SK-N-SH (cell line): ENCODE measurements at regions of chr14 and their contacts with region 1.

Region 1: GRCh38 chr14:62126879-62127478 is 364.8 kb downstream of the SNAPC1 start:
- DNase-seq: peak; percentile 28
- H3K4me3 ChIP-seq: no peak overlapping the region; a peak in 1 of 4 replicates
- H3K27ac ChIP-seq: no peak overlapping the region
- H3K4me1 ChIP-seq: no peaks in the 10 kb centered on the region
- H3K27me3 ChIP-seq: no peaks in the 10 kb centered on the region; the same call in 1 of the 2 replicates
- CTCF ChIP-seq: peak; percentile 85
- EP300 ChIP-seq: no peak
- RAD21 ChIP-seq: peak; percentile 90

Region 2: GRCh38 chr14:61296719-61297502 is 830.1 kb before region 1 on chr14:
- CTCF ChIA-PET with region 1: interaction called, 10 read pairs
- POLR2A ChIA-PET with region 1: no interaction called
- DNase-seq: peak; percentile 34
- H3K4me3 ChIP-seq: peak overlapping the region in 1 of 2 experiments; percentile 14; a peak in 1 of 4 replicates
- H3K27ac ChIP-seq: no peak overlapping the region
- H3K4me1 ChIP-seq: no peaks in the 10 kb centered on the region
- H3K27me3 ChIP-seq: no peaks in the 10 kb centered on the region
- CTCF ChIP-seq: peak; percentile 86
- EP300 ChIP-seq: no peak
- RAD21 ChIP-seq: peak; percentile 76

Region 3: DNA sequence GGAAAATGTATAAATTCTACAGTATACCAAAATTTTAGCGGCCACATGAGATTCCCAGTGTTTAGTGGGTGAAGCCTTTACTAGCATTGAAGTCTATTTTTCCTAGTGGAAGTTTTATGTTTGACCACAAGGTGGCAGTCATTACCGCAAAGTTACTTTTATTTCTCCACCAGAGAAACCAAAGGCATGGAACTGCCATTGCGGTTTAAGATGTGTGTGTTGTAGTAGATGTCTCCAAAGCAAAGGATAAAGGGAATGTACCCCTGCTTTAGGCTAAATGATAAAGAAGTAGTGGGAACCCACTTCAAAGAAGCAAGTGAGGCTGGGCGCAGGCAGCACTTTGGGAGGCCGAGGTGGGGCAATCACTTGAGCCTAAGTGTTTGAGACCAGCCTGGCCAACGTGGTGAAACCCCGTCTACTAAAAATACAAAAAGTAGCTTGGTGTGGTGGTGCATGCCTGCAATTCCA is 665.1 kb before region 1 on chr14:
- CTCF ChIA-PET with region 1: interaction called, 14 read pairs
- POLR2A ChIA-PET with region 1: no interaction called
- DNase-seq: peak; percentile 44
- H3K4me3 ChIP-seq: no peak overlapping the region; a peak in 1 of 4 replicates
- H3K27ac ChIP-seq: peak overlapping the region; percentile 51 to 97; a peak in 3 of 4 replicates
- H3K4me1 ChIP-seq: peaks cover 9 to 27% of the 10 kb centered on the region in 2 experiments
- H3K27me3 ChIP-seq: no peaks in the 10 kb centered on the region
- CTCF ChIP-seq: peak; percentile 78
- EP300 ChIP-seq: no peak
- RAD21 ChIP-seq: peak; percentile 97

Region 4: GRCh38 chr14:61894452-61895077 is 232.4 kb before region 1 on chr14:
- CTCF ChIA-PET with region 1: interaction called, 71 read pairs
- POLR2A ChIA-PET with region 1: no interaction called
- DNase-seq: peak; percentile 67
- H3K4me3 ChIP-seq: peak overlapping the region in 1 of 2 experiments; percentile 31; a peak in 1 of 4 replicates
- H3K27ac ChIP-seq: no peak overlapping the region
- H3K4me1 ChIP-seq: no peaks in the 10 kb centered on the region
- H3K27me3 ChIP-seq: peaks cover 12% of the 10 kb centered on the region; the same call in 1 of the 2 replicates
- CTCF ChIP-seq: peak; percentile 74
- EP300 ChIP-seq: no peak
- RAD21 ChIP-seq: peak; percentile 85

Region 5: GRCh38 chr14:61927520-61927919 is 199.5 kb before region 1 on chr14:
- CTCF ChIA-PET with region 1: interaction called, 11 read pairs
- POLR2A ChIA-PET with region 1: no interaction called
- DNase-seq: no peak
- H3K4me3 ChIP-seq: no peak overlapping the region
- H3K27ac ChIP-seq: peak overlapping the region in 1 of 2 experiments; percentile 34; a peak in 1 of 4 replicates
- H3K4me1 ChIP-seq: peaks cover 0 to 11% of the 10 kb centered on the region in 2 experiments; a peak in 2 of 4 replicates
- H3K27me3 ChIP-seq: no peaks in the 10 kb centered on the region
- CTCF ChIP-seq: no peak
- EP300 ChIP-seq: no peak
- RAD21 ChIP-seq: no peak

Region 6: DNA sequence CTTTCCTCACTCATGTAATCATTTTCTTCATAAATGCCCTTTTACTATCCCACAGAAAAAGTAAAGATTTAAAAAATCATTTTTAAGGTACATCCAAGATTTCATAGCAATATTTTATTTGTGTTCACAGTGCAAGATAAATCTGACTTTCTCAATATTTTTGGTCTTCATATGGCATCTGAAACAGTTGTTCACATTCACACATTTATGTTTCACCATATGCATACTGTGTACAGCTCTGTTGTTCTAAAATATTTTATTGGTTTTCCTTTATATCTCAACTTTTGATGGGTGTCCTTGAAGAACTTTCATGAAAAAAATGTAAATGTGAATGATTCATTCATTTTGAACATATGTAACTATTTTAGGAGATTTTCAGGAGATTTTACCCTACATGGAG is 16.0 kb before region 1 on chr14:
- CTCF ChIA-PET with region 1: interaction called, 59 read pairs
- POLR2A ChIA-PET with region 1: no interaction called
- DNase-seq: no peak
- H3K4me3 ChIP-seq: no peak overlapping the region
- H3K27ac ChIP-seq: no peak overlapping the region
- H3K4me1 ChIP-seq: no peaks in the 10 kb centered on the region
- H3K27me3 ChIP-seq: peaks cover 3% of the 10 kb centered on the region; the same call in 1 of the 2 replicates
- CTCF ChIP-seq: no peak
- EP300 ChIP-seq: no peak
- RAD21 ChIP-seq: no peak